CD8-positive, alpha-beta T cell (primary cell): ENCODE measurements at regions of chr6 and their contacts with region 1.

Region 1: GRCh38 chr6:125728739-125729138 is 20.7 kb upstream of the HEY2 start:
- DNase-seq: no peak
- ATAC-seq: no peak
- H3K4me3 ChIP-seq: no peak overlapping the region
- H3K4me3 Mint-ChIP-seq: no peak overlapping the region
- H3K27ac ChIP-seq: no peak overlapping the region
- H3K27ac Mint-ChIP-seq: no peak overlapping the region
- H3K4me1 ChIP-seq: no peaks in the 10 kb centered on the region
- H3K4me1 Mint-ChIP-seq: no peaks in the 10 kb centered on the region
- H3K27me3 ChIP-seq: no peaks in the 10 kb centered on the region
- H3K27me3 Mint-ChIP-seq: peaks cover 17% of the 10 kb centered on the region
- CTCF ChIP-seq: no peak

Region 2: DNA sequence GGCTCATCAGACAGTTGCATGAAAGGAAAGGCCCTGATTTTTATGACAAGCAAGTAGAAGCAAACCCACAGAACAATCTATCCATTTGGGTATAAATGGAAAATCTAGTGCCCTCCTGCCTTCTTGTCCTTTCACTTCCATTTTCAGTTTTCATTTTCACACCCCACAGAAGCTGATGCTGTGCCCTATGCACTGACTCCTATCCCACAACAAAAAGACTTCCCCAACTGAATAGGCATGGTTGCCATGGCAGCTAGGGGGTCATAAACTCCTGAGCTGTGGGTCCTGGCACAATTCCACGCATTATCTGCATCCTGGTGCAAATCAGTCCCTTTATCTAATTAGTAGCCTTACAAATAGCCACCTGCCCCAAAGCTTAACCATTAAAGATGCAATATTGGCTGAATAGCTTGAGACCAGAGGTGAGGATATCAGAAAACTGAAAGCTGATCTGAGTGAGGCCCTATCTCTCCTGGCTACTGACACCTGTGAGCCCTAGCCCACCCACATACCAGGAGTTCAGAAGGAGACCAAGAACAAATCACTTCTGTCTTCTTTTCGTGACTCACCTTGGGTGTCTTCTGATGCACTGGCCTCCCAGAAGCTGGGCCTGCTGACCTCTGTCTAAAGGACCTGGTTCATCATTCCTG is 14.2 kb before region 1 on chr6:
- CTCF ChIA-PET with region 1: no interaction called
- POLR2A ChIA-PET with region 1: no interaction called
- intact Hi-C with region 1: no loop called
- DNase-seq: peak in 1 of 9 experiments; percentile 4
- ATAC-seq: no peak
- H3K4me3 ChIP-seq: no peak overlapping the region
- H3K4me3 Mint-ChIP-seq: no peak overlapping the region
- H3K27ac ChIP-seq: no peak overlapping the region
- H3K27ac Mint-ChIP-seq: no peak overlapping the region
- H3K4me1 ChIP-seq: no peaks in the 10 kb centered on the region
- H3K4me1 Mint-ChIP-seq: no peaks in the 10 kb centered on the region
- H3K27me3 ChIP-seq: no peaks in the 10 kb centered on the region
- H3K27me3 Mint-ChIP-seq: peaks cover 6% of the 10 kb centered on the region
- CTCF ChIP-seq: no peak

Region 3: DNA sequence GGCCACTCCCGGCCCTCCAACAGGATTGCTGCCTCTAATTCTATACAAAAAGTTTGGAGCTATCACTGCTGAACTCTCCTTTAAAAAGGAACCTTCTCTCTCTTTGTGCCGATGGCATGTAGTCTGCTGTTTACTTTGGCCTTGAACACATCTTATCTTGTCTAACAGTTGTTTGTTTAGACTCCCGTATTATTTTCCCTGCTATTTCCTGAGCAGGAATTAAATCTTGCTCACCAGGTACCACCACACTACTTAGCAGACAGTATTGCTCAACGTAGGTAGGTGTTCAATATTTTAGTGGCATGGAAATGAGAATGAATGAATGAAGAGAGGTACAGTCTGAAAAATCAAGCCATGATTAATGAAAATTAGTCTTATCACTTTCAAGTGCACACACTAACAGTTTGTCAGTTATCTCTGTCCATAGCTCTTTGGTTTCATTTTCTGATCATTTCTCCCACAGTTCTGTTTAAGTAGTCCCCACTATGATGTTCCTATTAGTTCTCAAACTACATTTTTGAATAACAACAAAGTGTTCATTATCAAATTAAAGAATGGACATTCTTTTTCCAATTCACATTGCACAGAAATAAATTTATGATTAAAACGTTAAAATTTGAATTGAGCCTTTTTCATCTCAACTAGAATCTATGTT is 13.9 kb after region 1 on chr6:
- CTCF ChIA-PET with region 1: no interaction called
- POLR2A ChIA-PET with region 1: no interaction called
- intact Hi-C with region 1: loop called in 1 of 2 experiments (anchors 2 kb)
- DNase-seq: no peak
- ATAC-seq: no peak
- H3K4me3 ChIP-seq: no peak overlapping the region
- H3K4me3 Mint-ChIP-seq: no peak overlapping the region
- H3K27ac ChIP-seq: no peak overlapping the region
- H3K27ac Mint-ChIP-seq: no peak overlapping the region
- H3K4me1 ChIP-seq: peaks cover 4% of the 10 kb centered on the region
- H3K4me1 Mint-ChIP-seq: peaks cover 15% of the 10 kb centered on the region
- H3K27me3 ChIP-seq: no peaks in the 10 kb centered on the region
- H3K27me3 Mint-ChIP-seq: peaks cover 46% of the 10 kb centered on the region
- CTCF ChIP-seq: no peak